Endothelial cell of umbilical vein (primary cell): ENCODE measurements at regions of chr19 and their contacts with region 1.

Region 1: DNA sequence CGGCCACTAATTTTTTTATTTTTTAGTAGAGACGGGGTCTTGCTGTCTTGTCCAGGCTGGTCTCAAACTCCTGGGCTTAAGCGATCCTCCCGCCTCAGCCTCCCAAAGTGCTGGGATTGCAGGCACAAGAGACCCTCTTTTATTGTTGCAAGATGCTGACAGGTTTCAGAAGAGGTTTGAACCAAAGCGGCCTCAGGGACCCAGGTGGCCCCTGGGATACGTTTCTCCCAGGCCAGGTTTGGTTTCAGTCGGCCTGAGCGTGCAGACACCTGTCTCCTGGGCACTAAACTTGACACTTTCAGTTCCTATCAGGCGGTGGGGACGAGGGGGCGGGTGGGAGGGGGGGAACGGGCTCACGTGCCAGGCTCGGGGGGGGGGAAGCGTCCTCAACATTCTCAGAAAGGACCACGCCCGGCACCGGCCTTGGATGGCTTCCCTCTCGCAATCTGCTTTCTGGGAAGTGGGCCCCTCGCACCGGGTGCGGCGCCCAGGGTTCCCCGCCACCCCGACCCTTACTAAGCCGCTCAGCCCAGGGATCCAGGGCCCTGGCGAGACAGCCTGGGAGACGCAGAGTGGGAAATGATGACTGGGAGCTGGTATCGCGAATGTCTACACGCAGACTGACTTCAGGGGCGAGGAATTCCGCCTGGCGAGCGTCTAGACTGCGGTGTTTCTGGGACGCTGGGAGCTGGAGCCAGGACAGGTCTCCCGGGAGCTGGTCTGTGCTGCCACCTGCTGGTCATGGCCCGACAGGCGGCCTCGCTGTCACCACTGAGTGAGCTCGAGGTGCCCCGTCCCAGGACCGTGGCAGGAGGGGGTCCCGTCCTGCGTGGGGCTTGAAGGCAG is 91.6 kb downstream of the GNG7 start:
- DNase-seq: peak; percentile 85
- H3K4me3 ChIP-seq: peak overlapping the region in 1 of 3 experiments; percentile 9
- H3K27ac ChIP-seq: peak overlapping the region; percentile 62
- H3K4me1 ChIP-seq: peaks cover under 1% of the 10 kb centered on the region
- H3K27me3 ChIP-seq: no peaks in the 10 kb centered on the region
- CTCF ChIP-seq: peak; percentile 96 to 98
- POLR2A ChIP-seq: no peak

Region 2: GRCh38 chr19:2391118-2391725 is 219.6 kb before region 1 on chr19:
- CTCF ChIA-PET with region 1: interaction called, 14 read pairs
- POLR2A ChIA-PET with region 1: no interaction called
- dilution Hi-C with region 1: no loop called
- intact Hi-C with region 1: loop called (anchors 10 kb)
- DNase-seq: peak; percentile 73
- H3K4me3 ChIP-seq: no peak overlapping the region
- H3K27ac ChIP-seq: no peak overlapping the region
- H3K4me1 ChIP-seq: no peaks in the 10 kb centered on the region
- H3K27me3 ChIP-seq: peaks cover 3 to 4% of the 10 kb centered on the region in 2 experiments
- CTCF ChIP-seq: peak; percentile 60 to 67
- POLR2A ChIP-seq: no peak

Region 3: DNA sequence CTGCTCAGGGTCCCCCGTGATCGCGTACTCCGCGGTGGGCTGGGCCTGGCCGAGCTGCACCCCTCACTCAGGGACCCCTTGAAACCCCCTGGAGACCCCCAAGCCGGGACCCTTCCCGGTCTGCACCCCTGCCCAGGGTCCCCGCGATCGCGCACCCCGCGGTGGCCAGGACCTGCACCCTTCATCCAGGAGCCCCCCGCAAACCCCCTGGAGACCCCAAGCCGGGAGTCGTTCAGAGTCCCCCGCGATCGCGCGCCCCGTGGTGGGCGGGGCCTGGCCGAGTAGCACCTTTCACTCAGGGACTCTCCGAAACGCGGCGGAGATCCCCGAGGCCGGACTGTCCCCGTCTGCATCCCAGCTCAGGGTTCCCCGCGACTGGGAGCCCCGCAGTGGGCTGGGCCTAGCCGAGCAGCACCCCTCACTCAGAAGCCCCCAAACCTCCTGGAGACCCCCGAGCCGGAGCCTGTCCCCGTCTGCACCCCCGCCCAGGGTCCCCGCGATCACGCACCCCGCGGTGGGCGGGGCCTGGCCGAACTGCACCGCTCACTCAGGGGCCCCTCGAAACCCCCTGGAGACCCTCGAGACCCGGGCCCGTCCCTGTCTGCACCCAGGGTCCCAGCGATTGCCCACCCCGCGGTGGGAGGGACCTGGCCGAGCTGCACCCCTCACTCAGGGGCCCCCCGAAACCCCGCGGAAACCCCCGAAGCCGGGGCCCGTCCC is 154.8 kb before region 1 on chr19:
- CTCF ChIA-PET with region 1: interaction called, 27 read pairs
- POLR2A ChIA-PET with region 1: no interaction called
- dilution Hi-C with region 1: no loop called
- intact Hi-C with region 1: no loop called
- DNase-seq: no peak
- H3K4me3 ChIP-seq: peak overlapping the region; percentile 69 to 100 (median 80)
- H3K27ac ChIP-seq: peak overlapping the region; percentile 68
- H3K4me1 ChIP-seq: peaks cover 13% of the 10 kb centered on the region
- H3K27me3 ChIP-seq: no peaks in the 10 kb centered on the region
- CTCF ChIP-seq: no peak
- POLR2A ChIP-seq: no peak

Region 4: GRCh38 chr19:2543463-2544442 is 67.1 kb before region 1 on chr19:
- CTCF ChIA-PET with region 1: interaction called, 15 read pairs
- POLR2A ChIA-PET with region 1: interaction called, 7 read pairs
- dilution Hi-C with region 1: no loop called
- intact Hi-C with region 1: loop called (anchors 5 kb)
- DNase-seq: peak; percentile 97
- H3K4me3 ChIP-seq: peak overlapping the region in 1 of 3 experiments; percentile 20
- H3K27ac ChIP-seq: peak overlapping the region; percentile 99
- H3K4me1 ChIP-seq: peaks cover 58% of the 10 kb centered on the region
- H3K27me3 ChIP-seq: no peaks in the 10 kb centered on the region
- CTCF ChIP-seq: peak; percentile 22 to 46
- POLR2A ChIP-seq: peak; percentile 55

Region 5: GRCh38 chr19:3035542-3036118 is 424.8 kb after region 1 on chr19:
- CTCF ChIA-PET with region 1: no interaction called
- POLR2A ChIA-PET with region 1: no interaction called
- dilution Hi-C with region 1: no loop called
- intact Hi-C with region 1: no loop called
- DNase-seq: peak; percentile 100
- H3K4me3 ChIP-seq: peak overlapping the region; percentile 39 to 73 (median 73)
- H3K27ac ChIP-seq: peak overlapping the region; percentile 77
- H3K4me1 ChIP-seq: peaks cover 12% of the 10 kb centered on the region
- H3K27me3 ChIP-seq: peaks cover 0 to 3% of the 10 kb centered on the region in 2 experiments
- CTCF ChIP-seq: no peak
- POLR2A ChIP-seq: peak; percentile 44